Ascending aorta (tissue), 2 donors: ENCODE measurements at regions of chr17 and their contacts with region 1.

Region 1: GRCh38 chr17:55527540-55528118 is 16.4 kb upstream of the SMIM36 start:
- DNase-seq: no peak
- H3K4me3 ChIP-seq: no peak overlapping the region
- H3K27ac ChIP-seq: no peak overlapping the region
- H3K4me1 ChIP-seq: no peaks in the 10 kb centered on the region
- H3K27me3 ChIP-seq: no peaks in the 10 kb centered on the region
- CTCF ChIP-seq: peak in 1 of 3 experiments; percentile 9

Region 2: DNA sequence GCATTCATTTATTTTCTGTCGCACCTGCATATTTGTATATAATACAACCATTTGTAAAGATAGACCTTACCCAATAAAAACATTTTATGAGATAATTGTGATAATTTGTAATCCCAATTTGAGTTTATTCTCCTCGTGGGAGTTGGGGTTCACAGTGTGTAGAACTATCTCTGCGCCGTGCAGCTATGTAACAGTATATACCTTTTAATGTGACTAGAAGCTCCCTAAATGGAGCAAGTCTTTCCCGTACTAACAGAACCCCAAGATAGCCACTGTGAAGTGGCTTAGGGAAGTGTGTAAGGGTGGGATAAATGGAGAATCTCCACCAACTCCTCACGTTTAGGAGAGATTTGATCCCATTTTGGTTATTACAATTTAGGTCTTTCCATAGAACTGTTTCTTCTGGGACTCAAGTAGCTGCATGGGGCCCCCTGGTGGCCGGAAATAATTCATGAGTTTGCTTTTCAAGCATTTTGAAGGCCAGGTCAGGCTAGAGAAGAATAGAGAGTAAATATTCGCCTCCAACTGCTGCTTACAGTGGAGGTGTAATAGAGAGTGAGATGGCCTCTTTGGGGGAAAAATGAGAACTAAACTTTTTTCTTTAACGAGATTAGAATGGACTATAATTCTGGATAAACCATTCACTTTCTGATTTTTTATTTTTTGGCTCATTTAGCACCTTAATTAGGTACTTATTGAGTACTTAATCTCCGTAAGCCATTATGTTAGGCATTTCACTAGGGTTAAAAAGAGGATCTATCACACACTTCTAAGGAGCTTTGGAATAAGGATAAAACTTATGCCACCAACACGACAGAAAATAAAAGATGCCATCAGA is 190.5 kb after region 1 on chr17:
- intact Hi-C with region 1: loop called (anchors 1 kb)
- DNase-seq: peak in 1 of 2 donors; percentile 89
- H3K4me3 ChIP-seq: no peak overlapping the region
- H3K27ac ChIP-seq: no peak overlapping the region
- H3K4me1 ChIP-seq: peaks cover 0 to 6% of the 10 kb centered on the region in 2 donors
- H3K27me3 ChIP-seq: no peaks in the 10 kb centered on the region
- CTCF ChIP-seq: peak; percentile 33 to 74 (median 60)

Region 3: GRCh38 chr17:55735731-55736405 is 208.2 kb after region 1 on chr17:
- intact Hi-C with region 1: loop called (anchors 1 kb)
- DNase-seq: peak in 1 of 2 donors; percentile 66
- H3K4me3 ChIP-seq: no peak overlapping the region
- H3K27ac ChIP-seq: no peak overlapping the region
- H3K4me1 ChIP-seq: peaks cover 0 to 4% of the 10 kb centered on the region in 2 donors
- H3K27me3 ChIP-seq: no peaks in the 10 kb centered on the region
- CTCF ChIP-seq: peak; percentile 23 to 70 (median 59)

Region 4: GRCh38 chr17:55770148-55770870 is 242.7 kb after region 1 on chr17:
- intact Hi-C with region 1: loop called (anchors 1 kb)
- DNase-seq: no peak
- H3K4me3 ChIP-seq: no peak overlapping the region
- H3K27ac ChIP-seq: no peak overlapping the region
- H3K4me1 ChIP-seq: no peaks in the 10 kb centered on the region
- H3K27me3 ChIP-seq: no peaks in the 10 kb centered on the region
- CTCF ChIP-seq: peak; percentile 36 to 64 (median 47)